Ovary (tissue), 10 donors: ENCODE measurements at regions of chr1 and their contacts with region 1.

Region 1: GRCh38 chr1:117284399-117285215 is 73.9 kb upstream of the VTCN1 start:
- DNase-seq: no peak
- H3K4me3 ChIP-seq: no peak overlapping the region
- H3K27ac ChIP-seq: no peak overlapping the region
- H3K4me1 ChIP-seq: no peaks in the 10 kb centered on the region
- H3K27me3 ChIP-seq: no peaks in the 10 kb centered on the region
- CTCF ChIP-seq: peak in 2 of 3 donors; percentile 33 to 46
- EP300 ChIP-seq: no peak
- POLR2A ChIP-seq: no peak

Region 2: DNA sequence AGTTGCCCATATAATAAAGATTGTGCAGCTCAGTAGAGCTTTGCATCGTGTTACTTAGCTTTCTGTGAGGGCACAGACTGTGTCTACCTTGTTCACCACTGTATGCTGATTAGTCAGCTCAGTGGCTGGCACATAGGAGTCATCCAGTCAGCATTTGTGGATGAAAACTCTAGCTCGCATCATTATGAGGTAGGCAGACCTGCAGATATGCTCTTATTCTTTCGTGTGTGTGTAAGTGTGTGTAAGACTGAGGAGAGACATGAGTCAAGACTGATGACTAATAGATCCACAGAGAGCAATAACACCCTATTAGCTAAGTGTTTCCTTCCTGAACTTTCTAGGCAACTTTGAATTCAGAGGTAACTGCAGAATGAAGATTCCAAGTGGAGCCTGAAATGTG is 207.3 kb before region 1 on chr1:
- intact Hi-C with region 1: loop called in 1 of 4 experiments (anchors 10 kb)
- DNase-seq: no peak
- H3K4me3 ChIP-seq: no peak overlapping the region
- H3K27ac ChIP-seq: no peak overlapping the region
- H3K4me1 ChIP-seq: no peaks in the 10 kb centered on the region
- H3K27me3 ChIP-seq: no peaks in the 10 kb centered on the region
- CTCF ChIP-seq: no peak
- EP300 ChIP-seq: no peak
- POLR2A ChIP-seq: no peak

Region 3: DNA sequence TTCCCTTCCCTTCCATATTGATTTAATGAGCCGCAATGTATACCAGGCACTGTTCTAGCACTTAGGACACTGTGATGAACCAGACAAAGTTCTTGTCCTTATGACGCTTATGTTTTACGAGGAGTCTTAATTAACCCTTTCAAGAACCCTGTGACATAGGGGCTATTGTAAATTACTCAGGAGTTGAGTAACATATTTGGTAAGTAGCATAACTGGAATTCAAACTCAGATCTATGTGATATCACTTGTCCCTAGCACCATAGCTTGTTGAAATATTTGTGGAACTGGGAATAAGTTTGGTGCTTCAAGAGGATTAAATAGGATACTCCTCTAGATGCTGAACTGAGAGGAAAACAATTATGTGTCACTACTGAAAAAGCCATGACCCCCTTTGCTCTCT is 46.6 kb after region 1 on chr1:
- intact Hi-C with region 1: no loop called
- DNase-seq: no peak
- H3K4me3 ChIP-seq: no peak overlapping the region
- H3K27ac ChIP-seq: no peak overlapping the region
- H3K4me1 ChIP-seq: no peaks in the 10 kb centered on the region
- H3K27me3 ChIP-seq: no peaks in the 10 kb centered on the region
- CTCF ChIP-seq: no peak
- EP300 ChIP-seq: no peak
- POLR2A ChIP-seq: no peak